AG04449 (cell line): ENCODE measurements at regions of chr20 and their contacts with region 1.

Region 1: GRCh38 chr20:8756410-8756809 is 312.5 kb upstream of the PLCB4 start:
- DNase-seq: peak; percentile 52
- H3K4me3 ChIP-seq: no peak overlapping the region
- CTCF ChIP-seq: no peak

Region 2: GRCh38 chr20:8774412-8774811 is 18.0 kb after region 1 on chr20:
- CTCF ChIA-PET with region 1: interaction called, 16 read pairs
- POLR2A ChIA-PET with region 1: no interaction called
- DNase-seq: no peak
- H3K4me3 ChIP-seq: no peak overlapping the region
- CTCF ChIP-seq: no peak

Region 3: DNA sequence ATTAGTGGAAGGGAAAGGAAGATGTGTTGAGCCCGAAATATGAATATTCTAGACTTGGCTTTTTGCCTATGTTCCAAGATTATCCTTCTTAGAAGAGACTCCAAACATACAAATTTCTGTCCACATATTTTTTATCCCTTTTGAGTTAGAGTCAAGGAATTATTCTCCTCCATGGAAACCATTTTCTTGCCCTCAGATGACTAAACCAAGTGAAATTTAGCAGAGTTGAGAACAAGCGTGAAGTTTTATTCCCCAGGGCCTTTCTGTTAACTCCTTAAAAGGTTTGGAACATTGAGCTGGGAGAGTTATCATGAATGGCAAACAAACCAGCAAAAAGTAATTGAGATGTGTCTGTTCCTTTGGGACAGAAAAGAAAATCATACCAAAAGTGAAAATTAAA is 26.4 kb after region 1 on chr20:
- CTCF ChIA-PET with region 1: interaction called, 15 read pairs
- POLR2A ChIA-PET with region 1: no interaction called
- DNase-seq: peak; percentile 59
- H3K4me3 ChIP-seq: no peak overlapping the region
- CTCF ChIP-seq: no peak

Region 4: GRCh38 chr20:8790442-8791074 is 34.1 kb after region 1 on chr20:
- CTCF ChIA-PET with region 1: interaction called, 13 read pairs
- POLR2A ChIA-PET with region 1: no interaction called
- DNase-seq: no peak
- H3K4me3 ChIP-seq: no peak overlapping the region
- CTCF ChIP-seq: peak; percentile 74

Region 5: GRCh38 chr20:9359561-9360308 is 603.3 kb after region 1 on chr20:
- CTCF ChIA-PET with region 1: interaction called, 21 read pairs
- POLR2A ChIA-PET with region 1: no interaction called
- DNase-seq: no peak
- H3K4me3 ChIP-seq: no peak overlapping the region
- CTCF ChIP-seq: no peak

Region 6: DNA sequence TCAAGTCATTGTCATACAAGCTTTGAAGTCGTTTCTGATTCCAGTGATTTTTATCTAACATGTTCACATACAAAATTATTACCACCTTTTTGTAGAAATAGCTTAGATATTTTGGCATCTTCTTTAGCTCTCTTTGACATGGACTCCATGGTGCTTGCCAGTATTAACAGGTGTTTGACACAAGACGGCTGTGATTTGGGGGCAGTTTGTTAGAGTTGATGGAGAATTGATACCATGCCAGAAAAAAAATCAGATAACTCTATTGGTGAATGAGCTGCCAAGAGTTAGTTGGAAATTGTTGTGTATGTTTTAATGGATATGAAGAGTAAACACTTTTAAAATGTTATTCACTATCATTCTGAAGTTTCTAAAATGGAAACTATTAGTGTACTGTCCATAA is 611.3 kb after region 1 on chr20:
- CTCF ChIA-PET with region 1: interaction called, 10 read pairs
- POLR2A ChIA-PET with region 1: no interaction called
- DNase-seq: no peak
- H3K4me3 ChIP-seq: no peak overlapping the region
- CTCF ChIP-seq: no peak

Region 7: GRCh38 chr20:9392892-9393857 is 636.8 kb after region 1 on chr20:
- CTCF ChIA-PET with region 1: interaction called, 62 read pairs
- POLR2A ChIA-PET with region 1: no interaction called
- DNase-seq: no peak
- H3K4me3 ChIP-seq: no peak overlapping the region
- CTCF ChIP-seq: peak; percentile 91